Ovary (tissue), 10 donors: ENCODE measurements at regions of chr15 and their contacts with region 1.

Region 1: DNA sequence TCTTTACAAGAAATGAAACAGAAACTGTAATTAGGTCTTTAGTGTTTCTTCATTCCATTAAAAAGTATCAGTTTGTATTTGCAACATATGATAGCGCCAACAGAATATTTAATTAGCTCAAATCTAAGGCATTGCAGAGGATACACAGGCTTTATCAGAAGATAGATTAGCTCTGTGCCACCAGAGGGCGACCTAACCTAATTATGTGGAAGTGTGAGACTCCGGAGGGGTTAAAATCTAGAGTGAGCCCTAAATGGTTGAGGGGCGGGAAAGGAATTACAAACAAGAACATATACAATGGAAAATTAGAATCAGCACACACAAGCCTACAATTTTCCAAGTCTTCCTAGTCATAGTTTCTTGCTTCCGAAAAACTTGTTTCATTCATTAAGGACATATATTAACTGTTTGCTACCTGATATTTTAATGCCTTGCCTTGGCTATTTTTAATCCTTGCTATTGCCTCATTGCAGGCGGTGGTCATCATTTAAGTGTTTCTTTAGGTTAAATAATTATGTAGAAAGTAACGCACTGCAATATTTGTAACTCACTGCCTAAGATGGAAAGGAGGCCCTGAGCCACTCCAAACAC is 18.0 kb upstream of the RYR3 start:
- DNase-seq: peak; percentile 34 to 74 (median 52)
- H3K4me3 ChIP-seq: no peak overlapping the region
- H3K27ac ChIP-seq: no peak overlapping the region
- H3K4me1 ChIP-seq: peaks cover 2% of the 10 kb centered on the region
- H3K27me3 ChIP-seq: no peaks in the 10 kb centered on the region
- CTCF ChIP-seq: peak in 2 of 3 donors; percentile 49 to 56
- EP300 ChIP-seq: no peak
- POLR2A ChIP-seq: no peak

Region 2: DNA sequence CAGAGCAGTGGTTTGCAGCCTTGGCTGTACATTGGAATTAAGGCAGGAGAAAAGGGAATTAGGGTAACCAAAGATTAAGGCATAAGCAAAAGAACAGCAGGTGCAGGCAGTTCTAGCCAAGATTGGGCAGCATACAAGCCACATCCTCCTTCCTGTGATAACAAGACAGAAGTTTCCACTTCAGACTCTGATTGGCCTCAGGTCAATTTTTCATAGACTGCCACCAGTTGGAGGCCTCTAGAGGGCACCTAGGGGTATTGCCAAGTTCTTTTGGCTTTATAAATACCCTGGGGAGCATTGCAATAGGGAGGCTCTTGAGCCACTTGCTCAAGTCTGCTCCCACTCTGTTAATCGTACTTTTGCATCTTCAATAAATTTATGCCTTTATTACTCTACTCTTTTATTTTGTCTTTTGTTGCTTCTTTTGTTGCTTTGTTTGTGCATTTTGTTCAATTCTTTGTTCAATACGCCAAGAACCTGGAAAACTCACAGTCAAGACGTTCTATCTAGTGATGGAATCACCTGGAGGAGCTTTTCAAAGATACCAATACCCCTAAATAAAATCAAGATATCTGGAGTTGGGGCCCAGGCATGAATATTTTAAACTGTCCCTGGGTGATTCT is 66.1 kb before region 1 on chr15:
- intact Hi-C with region 1: no loop called
- DNase-seq: no peak
- H3K4me3 ChIP-seq: no peak overlapping the region
- H3K27ac ChIP-seq: no peak overlapping the region
- H3K4me1 ChIP-seq: no peaks in the 10 kb centered on the region
- H3K27me3 ChIP-seq: no peaks in the 10 kb centered on the region
- CTCF ChIP-seq: no peak
- EP300 ChIP-seq: no peak
- POLR2A ChIP-seq: no peak

Region 3: DNA sequence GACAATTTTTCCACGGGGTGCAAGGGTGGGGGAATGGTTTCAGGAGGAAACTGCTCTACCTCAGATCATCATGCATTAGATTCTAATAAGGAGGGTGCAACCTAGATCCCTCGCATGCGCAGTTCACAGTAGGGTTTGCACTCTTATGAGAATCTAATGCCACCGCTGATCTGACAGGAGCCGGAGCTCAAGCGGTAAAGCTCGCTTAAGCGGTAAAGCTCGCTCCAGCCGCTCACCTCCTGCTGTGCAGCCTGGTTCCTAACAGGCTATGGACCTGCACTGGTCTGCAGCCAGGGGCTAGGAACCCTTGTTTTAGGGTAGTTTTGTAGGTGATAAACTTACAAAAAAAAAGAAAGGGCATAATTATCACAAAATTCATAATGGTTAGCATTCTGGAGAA is 35.9 kb before region 1 on chr15:
- intact Hi-C with region 1: no loop called
- DNase-seq: no peak
- H3K4me3 ChIP-seq: no peak overlapping the region
- H3K27ac ChIP-seq: no peak overlapping the region
- H3K4me1 ChIP-seq: no peaks in the 10 kb centered on the region
- H3K27me3 ChIP-seq: no peaks in the 10 kb centered on the region
- CTCF ChIP-seq: no peak
- EP300 ChIP-seq: no peak
- POLR2A ChIP-seq: no peak

Region 4: DNA sequence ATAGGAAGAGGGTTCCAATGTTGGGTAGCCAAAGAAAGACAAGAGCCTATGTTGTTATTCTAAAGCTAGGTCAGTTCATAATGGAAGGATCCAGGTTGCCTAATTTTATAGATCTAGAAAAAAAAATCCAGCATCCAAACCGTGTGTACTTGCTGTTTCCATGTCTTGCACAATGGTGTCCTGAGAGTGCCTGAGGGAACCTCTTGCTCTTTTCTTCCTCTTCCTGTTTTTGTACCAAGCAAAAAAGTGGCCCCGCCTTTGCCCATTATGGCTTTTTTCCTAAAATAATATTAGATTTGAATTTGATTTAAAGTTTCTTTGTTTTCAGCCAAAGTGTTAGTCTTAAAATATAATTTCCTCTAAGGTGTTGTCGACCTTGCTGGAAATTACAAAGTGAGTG is 242.3 kb after region 1 on chr15:
- intact Hi-C with region 1: no loop called
- DNase-seq: no peak
- H3K4me3 ChIP-seq: no peak overlapping the region
- H3K27ac ChIP-seq: no peak overlapping the region
- H3K4me1 ChIP-seq: no peaks in the 10 kb centered on the region
- H3K27me3 ChIP-seq: no peaks in the 10 kb centered on the region
- CTCF ChIP-seq: no peak
- EP300 ChIP-seq: no peak
- POLR2A ChIP-seq: no peak

Region 5: DNA sequence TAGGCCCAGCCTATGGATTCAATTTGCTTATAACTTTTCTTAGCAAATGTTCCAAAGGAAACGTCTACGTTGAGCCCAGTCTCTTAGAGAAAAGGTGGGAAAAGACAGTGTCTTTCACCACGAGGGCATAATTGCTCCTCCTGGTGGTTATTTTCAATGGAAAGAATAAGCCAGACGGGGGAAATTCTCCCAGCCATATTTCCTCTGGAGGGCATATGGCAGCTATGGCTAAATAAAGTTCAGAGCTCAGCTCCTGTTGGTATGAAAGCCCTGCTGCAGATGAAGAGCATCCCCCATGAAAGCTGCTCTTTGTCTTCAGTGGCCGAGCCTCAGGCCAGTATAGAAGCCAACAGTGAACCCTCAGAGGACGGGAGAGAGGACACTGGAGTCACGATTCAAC is 315.9 kb after region 1 on chr15:
- intact Hi-C with region 1: loop called in 1 of 4 experiments (anchors 10 kb)
- DNase-seq: no peak
- H3K4me3 ChIP-seq: no peak overlapping the region
- H3K27ac ChIP-seq: no peak overlapping the region
- H3K4me1 ChIP-seq: no peaks in the 10 kb centered on the region
- H3K27me3 ChIP-seq: no peaks in the 10 kb centered on the region
- CTCF ChIP-seq: no peak
- EP300 ChIP-seq: no peak
- POLR2A ChIP-seq: no peak

Region 6: DNA sequence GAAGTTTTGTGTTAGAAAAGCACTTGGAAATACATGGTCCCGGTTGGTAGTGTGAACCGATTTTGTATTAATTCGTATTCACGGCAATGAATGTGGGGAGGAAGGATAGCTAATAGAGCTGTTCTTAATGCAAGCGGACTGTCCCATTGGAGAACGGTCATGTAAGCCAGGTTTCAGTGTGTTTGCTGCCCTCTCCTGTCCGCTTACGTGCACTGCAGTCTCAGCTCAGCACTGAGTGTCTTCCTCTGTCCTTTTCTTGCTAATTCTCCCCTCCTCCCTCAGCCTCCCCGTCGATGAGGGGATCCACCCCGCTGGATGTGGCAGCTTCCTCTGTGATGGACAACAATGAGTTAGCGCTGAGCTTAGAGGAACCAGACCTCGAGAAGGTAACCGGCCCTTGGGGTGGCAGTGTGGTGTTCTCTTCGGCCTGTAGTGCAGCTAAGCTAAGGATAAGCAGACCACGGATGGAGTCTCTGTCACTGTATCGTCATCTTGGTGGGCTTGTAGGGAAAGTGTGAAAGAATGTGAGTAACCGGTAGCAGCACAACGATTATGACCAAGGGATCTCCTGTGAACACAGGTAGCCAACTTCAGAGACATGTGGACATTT is 408.0 kb after region 1 on chr15:
- intact Hi-C with region 1: loop called in 3 of 4 experiments (anchors 5 to 10 kb)
- DNase-seq: peak; percentile 43 to 78 (median 74)
- H3K4me3 ChIP-seq: no peak overlapping the region
- H3K27ac ChIP-seq: no peak overlapping the region
- H3K4me1 ChIP-seq: no peaks in the 10 kb centered on the region
- H3K27me3 ChIP-seq: no peaks in the 10 kb centered on the region
- CTCF ChIP-seq: peak; percentile 60 to 77 (median 66)
- EP300 ChIP-seq: no peak
- POLR2A ChIP-seq: no peak

Region 7: GRCh38 chr15:33915571-33916407 is 623.0 kb after region 1 on chr15:
- intact Hi-C with region 1: no loop called
- DNase-seq: peak in 1 of 5 donors; percentile 14
- H3K4me3 ChIP-seq: no peak overlapping the region
- H3K27ac ChIP-seq: no peak overlapping the region
- H3K4me1 ChIP-seq: no peaks in the 10 kb centered on the region
- H3K27me3 ChIP-seq: no peaks in the 10 kb centered on the region
- CTCF ChIP-seq: no peak
- EP300 ChIP-seq: no peak
- POLR2A ChIP-seq: no peak